ENCODE measurements at regions of chr14 and their contacts with region 1.

Region 1: DNA sequence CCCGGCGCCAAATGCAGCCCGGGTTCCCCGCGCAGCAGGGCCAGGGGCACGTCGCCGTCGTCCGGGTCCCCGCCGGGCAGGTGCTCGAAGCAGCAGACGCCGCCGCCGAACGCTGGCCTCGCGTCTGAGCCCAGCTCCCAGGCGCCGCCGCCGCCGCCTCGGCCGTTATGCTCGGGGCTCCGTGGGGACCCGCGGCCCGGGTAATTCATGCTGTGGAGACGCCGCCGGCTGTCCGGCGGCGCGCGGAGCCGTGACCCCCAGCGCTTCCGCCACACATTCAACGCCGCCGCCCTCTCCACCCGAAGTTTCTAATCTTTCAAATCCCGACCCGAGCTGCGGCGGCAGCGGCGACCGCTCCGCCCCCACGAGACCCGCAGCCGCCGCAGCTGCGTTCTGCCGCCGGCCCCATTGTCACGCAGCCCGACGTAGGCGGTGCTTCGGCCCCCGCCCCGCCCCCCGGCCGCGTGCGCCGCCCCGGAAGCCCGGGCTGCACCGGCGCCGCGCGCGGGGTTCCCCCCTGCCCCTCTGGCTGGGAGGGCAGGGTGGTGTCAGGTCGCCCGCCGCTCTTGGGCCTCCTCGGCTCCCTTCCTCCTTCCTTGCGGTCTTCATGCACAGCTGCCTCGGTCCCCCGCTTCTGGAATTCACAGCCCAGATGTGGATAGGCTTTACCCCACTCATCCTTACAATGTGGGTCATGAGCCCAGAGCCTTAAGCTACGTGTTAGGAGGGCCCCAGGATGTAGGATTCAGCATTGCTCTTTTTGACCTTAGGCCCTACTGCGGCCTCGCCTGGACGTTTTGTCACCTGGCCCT is at the start of gene DDHD1:
- DNase-seq: peak; percentile 82
- H3K4me3 Mint-ChIP-seq: peak within 1 kb of the TSS; percentile 99
- H3K27ac Mint-ChIP-seq: peak within 1 kb of the TSS; percentile 100
- H3K4me1 Mint-ChIP-seq: peaks cover 45% of the 10 kb centered on the region
- H3K27me3 Mint-ChIP-seq: no peaks in the 10 kb centered on the region
- total RNA-seq, gene DDHD1: 53.7 and 54.6 TPM in 2 replicates

Region 2: DNA sequence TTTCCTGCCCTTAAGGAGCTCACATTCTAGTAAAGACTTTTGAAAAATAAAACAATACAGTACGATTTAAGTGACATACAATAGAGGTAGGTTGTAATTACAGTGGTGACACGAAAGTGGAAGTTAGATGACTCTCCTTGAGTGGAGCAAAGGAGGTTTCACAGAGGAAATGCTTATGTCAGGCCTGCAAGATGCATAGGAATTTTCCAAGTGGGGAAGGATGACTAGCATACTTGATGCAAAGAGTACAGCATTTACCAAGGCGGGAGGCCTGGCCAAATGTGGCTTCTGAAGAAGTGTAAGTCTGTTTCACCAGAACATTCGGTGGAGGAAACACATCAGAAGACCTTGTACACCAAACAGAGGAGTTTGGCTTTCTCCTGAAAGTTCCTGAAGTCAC is 513.0 kb before region 1 on chr14:
- intact Hi-C with region 1: no loop called
- DNase-seq: no peak
- H3K4me3 Mint-ChIP-seq: no peak overlapping the region
- H3K27ac Mint-ChIP-seq: peak overlapping the region; percentile 66
- H3K4me1 Mint-ChIP-seq: peaks cover 11% of the 10 kb centered on the region
- H3K27me3 Mint-ChIP-seq: peaks cover under 1% of the 10 kb centered on the region

Region 3: GRCh38 chr14:52706724-52707706 is 446.1 kb before region 1 on chr14 and contains the start of gene PSMC6:
- intact Hi-C with region 1: loop called (anchors 2 kb)
- DNase-seq: peak; percentile 84
- H3K4me3 Mint-ChIP-seq: peak within 1 kb of the TSS; percentile 99
- H3K27ac Mint-ChIP-seq: peak within 1 kb of the TSS; percentile 93
- H3K4me1 Mint-ChIP-seq: peaks cover 39% of the 10 kb centered on the region
- H3K27me3 Mint-ChIP-seq: no peaks in the 10 kb centered on the region
- total RNA-seq, gene PSMC6: 144 and 155 TPM in 2 replicates

Region 4: GRCh38 chr14:53093206-53093605 is 59.9 kb before region 1 on chr14:
- intact Hi-C with region 1: no loop called
- DNase-seq: no peak
- H3K4me3 Mint-ChIP-seq: no peak overlapping the region
- H3K27ac Mint-ChIP-seq: no peak overlapping the region
- H3K4me1 Mint-ChIP-seq: peaks cover 3% of the 10 kb centered on the region
- H3K27me3 Mint-ChIP-seq: no peaks in the 10 kb centered on the region

Region 5: DNA sequence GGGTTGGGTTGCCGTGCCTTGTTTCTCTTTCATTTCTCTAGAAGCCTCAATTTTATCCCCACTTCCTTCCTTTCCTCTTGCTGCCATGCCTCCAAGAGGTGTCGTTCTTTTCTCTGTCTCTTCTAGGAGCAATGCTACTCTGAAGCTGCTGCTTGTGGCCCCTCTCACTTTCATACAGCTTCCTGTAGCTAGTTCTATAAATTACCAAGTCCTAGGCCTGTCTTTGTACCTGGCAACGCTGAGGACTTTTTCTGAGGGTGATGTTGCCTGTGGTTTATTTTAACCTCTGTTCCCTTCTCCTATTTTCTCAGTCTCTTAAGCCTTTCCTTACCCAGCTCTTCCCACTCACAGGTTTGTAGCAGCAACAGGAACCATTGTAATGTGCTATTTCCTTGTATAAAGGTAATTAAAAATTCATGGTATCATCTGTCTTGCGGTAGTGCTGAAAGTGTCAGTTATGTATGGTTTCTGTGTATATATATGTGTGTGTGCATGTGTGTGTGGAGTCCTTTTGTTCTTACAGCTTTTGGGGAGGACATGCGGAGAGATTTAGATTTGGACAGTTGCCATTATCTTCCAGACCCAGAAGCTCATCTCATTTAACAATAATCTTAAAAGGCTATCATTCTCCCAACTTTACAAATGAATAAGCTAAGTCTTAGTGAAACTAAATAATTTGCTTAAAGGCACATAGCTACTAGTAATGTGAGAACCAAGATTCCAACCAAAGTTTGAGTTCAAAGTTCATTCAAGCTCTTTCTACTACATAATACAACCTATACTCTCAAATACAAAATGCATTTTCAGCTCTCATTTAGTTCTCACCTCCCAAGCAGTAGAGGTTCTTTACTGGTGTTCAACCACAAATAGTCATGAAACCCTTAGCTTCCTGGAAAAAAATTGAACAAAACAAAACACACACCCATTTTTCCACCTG is 43.7 kb before region 1 on chr14:
- intact Hi-C with region 1: loop called (anchors 1 kb)
- DNase-seq: peak; percentile 72
- H3K4me3 Mint-ChIP-seq: no peak overlapping the region
- H3K27ac Mint-ChIP-seq: no peak overlapping the region
- H3K4me1 Mint-ChIP-seq: peaks cover 29% of the 10 kb centered on the region
- H3K27me3 Mint-ChIP-seq: no peaks in the 10 kb centered on the region

Region 6: GRCh38 chr14:53190938-53191337 is 37.8 kb after region 1 on chr14:
- intact Hi-C with region 1: loop called (anchors 1 kb)
- DNase-seq: no peak
- H3K4me3 Mint-ChIP-seq: no peak overlapping the region
- H3K27ac Mint-ChIP-seq: peak overlapping the region; percentile 84
- H3K4me1 Mint-ChIP-seq: peaks cover 33% of the 10 kb centered on the region
- H3K27me3 Mint-ChIP-seq: no peaks in the 10 kb centered on the region

Region 7: DNA sequence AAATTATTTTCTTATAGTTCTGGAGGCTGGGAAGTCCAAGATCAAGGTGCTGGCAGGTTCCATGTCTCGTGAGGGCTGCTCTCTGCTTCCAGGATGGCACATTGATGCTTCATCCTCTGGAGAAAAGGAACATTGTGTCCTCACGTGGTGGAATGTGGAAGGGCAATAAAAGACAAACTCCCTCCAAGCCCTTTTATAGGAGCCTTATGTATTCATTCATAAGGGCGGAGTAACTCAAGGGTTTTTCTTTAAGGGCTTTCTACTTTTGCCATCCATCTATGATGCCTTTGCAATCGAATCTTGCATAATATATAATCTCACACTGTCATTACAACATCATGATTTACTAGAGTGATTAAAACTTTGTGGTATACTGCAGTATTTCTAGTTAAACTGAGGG is 132.7 kb after region 1 on chr14:
- intact Hi-C with region 1: no loop called
- DNase-seq: no peak
- H3K4me3 Mint-ChIP-seq: no peak overlapping the region
- H3K27ac Mint-ChIP-seq: no peak overlapping the region
- H3K4me1 Mint-ChIP-seq: no peaks in the 10 kb centered on the region
- H3K27me3 Mint-ChIP-seq: peaks cover under 1% of the 10 kb centered on the region

Region 8: GRCh38 chr14:53346988-53347387 is 193.9 kb after region 1 on chr14:
- intact Hi-C with region 1: no loop called
- DNase-seq: no peak
- H3K4me3 Mint-ChIP-seq: no peak overlapping the region
- H3K27ac Mint-ChIP-seq: no peak overlapping the region
- H3K4me1 Mint-ChIP-seq: no peaks in the 10 kb centered on the region
- H3K27me3 Mint-ChIP-seq: no peaks in the 10 kb centered on the region

Region 9: DNA sequence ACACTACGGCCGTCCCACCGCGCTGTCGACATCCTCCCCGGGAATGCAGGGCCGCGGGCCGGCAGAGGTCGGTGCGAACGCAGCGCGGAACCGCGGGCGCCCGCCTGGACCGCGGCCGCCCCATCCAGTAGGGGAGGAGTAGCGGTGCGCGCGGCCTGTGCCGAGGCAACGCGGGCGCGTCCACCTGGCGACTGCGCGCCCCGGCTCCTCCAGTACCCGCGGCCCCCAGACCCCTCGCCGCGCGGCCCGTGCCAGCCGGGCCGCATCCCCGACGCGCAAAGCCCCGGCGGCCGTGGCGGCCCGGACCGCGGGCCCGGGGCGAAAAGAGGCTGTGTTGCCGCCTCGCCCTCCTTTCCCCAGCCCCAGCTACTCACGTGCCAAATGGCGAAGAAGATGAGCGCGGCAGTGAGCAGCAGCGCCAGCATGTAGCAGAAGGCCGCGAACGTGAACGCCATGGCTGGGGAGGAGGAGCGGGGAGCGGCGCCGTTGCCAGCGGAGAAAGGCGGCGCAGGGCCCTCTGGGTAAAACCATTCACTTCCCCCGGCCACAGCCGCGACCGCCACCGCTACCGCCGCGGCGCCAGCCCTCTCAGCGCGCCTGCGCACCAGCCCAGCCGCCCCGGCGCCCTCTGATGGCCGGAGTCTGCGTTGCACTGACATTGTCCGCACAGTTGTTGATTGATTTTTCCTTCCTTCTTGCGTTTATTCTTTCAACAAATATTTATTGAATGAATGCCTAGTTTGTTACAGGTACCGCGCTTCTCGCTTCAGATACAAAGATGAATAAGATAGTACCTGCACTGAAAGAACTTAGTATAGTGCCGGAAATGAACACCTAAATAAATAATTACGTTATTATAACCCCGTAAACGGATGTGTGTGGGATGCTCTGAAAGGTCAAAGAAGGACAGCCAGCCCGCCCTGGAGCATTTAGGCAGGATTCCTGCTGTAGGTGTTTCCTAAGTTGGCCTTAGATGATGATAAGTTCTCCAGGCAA is 1288.1 kb after region 1 on chr14 and contains the start of gene CNIH1:
- intact Hi-C with region 1: loop called (anchors 5 kb)
- DNase-seq: peak; percentile 90
- H3K4me3 Mint-ChIP-seq: peak within 1 kb of the TSS; percentile 95
- H3K27ac Mint-ChIP-seq: peak within 1 kb of the TSS; percentile 97
- H3K4me1 Mint-ChIP-seq: peaks cover 47% of the 10 kb centered on the region
- H3K27me3 Mint-ChIP-seq: peaks cover 5% of the 10 kb centered on the region
- total RNA-seq, gene CNIH1: 113 and 115 TPM in 2 replicates